ENCODE measurements at regions of chr3 and their contacts with region 1.

Region 1: GRCh38 chr3:119145500-119146191 is at the start of gene TEX55:
- DNase-seq: peak in 2 of 6 donors; percentile 26 to 43
- ATAC-seq: peak; percentile 80 to 97 (median 94)
- H3K4me3 ChIP-seq: no peak within 1 kb of the TSS
- H3K27ac ChIP-seq: no peak within 1 kb of the TSS
- H3K4me1 ChIP-seq: no peaks in the 10 kb centered on the region
- H3K27me3 ChIP-seq: no peaks in the 10 kb centered on the region
- CTCF ChIP-seq: peak; percentile 31 to 54 (median 34)
- total RNA-seq, gene TEX55: not detected

Region 2: DNA sequence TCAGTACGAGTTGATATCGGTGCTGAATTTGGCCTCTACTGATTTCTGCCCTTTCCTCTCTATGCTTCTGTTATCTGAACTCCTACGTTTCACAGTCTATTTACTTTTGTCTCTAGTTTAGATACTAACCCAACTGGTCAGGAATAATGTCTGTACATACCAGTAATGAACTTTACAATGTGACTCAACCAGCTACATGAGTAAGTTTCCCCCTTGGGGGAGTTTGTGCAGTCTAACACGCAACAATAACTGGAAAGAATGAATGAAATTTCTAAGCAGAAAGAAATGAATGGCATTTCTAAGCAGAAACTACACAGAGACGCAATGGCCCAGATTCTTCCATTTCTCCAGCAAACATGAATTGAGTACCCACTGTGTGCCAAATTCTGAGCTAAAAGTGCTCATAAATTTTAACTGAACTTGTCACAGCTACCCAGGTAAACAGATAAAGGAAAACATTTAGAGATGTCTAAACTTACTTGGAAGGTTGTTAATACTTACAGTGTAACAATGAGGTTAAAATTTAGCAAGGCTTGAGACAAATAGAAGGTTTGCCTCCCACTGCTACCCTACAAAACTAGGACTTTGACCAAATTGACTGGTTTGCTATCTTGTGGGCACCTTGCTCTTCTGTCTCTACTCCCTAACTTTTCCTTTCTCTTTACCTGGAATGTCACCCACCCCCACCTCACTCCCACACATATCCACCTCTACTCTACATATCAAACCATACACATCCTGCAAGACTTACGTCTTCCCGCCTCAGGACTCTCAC is 39.3 kb after region 1 on chr3:
- intact Hi-C with region 1: no loop called
- DNase-seq: no peak
- ATAC-seq: peak in 3 of 4 donors; percentile 26 to 59 (median 45)
- H3K4me3 ChIP-seq: no peak overlapping the region
- H3K27ac ChIP-seq: peak overlapping the region in 1 of 4 donors; percentile 23
- H3K4me1 ChIP-seq: peaks cover 0 to 4% (median 0%) of the 10 kb centered on the region in 3 donors
- H3K27me3 ChIP-seq: no peaks in the 10 kb centered on the region
- CTCF ChIP-seq: no peak

Region 3: DNA sequence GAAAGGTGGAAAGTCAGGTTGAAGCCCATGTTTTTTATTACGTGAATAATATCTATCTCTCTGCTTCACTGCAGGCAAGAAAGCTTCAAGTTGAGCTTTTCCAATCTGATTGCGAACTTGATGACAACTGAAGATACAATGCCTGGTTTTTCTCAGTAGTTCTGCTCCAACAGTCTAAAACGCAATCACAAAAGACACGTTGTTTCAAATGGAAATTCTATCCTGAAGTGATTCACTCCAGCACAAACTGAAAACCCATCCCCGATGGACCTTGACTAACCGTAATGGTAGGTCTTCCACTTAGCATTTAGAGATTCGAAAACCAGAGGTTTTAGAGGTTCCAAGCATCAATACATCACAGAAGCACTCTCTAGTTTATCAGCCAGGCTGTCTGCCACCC is 84.4 kb after region 1 on chr3:
- intact Hi-C with region 1: no loop called
- DNase-seq: no peak
- ATAC-seq: no peak
- H3K4me3 ChIP-seq: no peak overlapping the region
- H3K27ac ChIP-seq: no peak overlapping the region
- H3K4me1 ChIP-seq: peaks cover 0 to 4% (median 0%) of the 10 kb centered on the region in 3 donors
- H3K27me3 ChIP-seq: no peaks in the 10 kb centered on the region
- CTCF ChIP-seq: no peak

Region 4: GRCh38 chr3:119240591-119241434 is 95.2 kb after region 1 on chr3 and contains the start of gene B4GALT4:
- intact Hi-C with region 1: loop called in 1 of 3 experiments (anchors 10 kb)
- DNase-seq: peak; percentile 88 to 95 (median 90)
- ATAC-seq: peak; percentile 94 to 97 (median 95)
- H3K4me3 ChIP-seq: peak within 1 kb of the TSS; percentile 56 to 85 (median 65)
- H3K27ac ChIP-seq: peak within 1 kb of the TSS; percentile 88 to 91 (median 90)
- H3K4me1 ChIP-seq: peaks cover 15 to 19% (median 19%) of the 10 kb centered on the region in 3 donors
- H3K27me3 ChIP-seq: no peaks in the 10 kb centered on the region
- CTCF ChIP-seq: no peak
- total RNA-seq, gene B4GALT4: 9.1 to 20.1 (median 13.8) TPM

Region 5: DNA sequence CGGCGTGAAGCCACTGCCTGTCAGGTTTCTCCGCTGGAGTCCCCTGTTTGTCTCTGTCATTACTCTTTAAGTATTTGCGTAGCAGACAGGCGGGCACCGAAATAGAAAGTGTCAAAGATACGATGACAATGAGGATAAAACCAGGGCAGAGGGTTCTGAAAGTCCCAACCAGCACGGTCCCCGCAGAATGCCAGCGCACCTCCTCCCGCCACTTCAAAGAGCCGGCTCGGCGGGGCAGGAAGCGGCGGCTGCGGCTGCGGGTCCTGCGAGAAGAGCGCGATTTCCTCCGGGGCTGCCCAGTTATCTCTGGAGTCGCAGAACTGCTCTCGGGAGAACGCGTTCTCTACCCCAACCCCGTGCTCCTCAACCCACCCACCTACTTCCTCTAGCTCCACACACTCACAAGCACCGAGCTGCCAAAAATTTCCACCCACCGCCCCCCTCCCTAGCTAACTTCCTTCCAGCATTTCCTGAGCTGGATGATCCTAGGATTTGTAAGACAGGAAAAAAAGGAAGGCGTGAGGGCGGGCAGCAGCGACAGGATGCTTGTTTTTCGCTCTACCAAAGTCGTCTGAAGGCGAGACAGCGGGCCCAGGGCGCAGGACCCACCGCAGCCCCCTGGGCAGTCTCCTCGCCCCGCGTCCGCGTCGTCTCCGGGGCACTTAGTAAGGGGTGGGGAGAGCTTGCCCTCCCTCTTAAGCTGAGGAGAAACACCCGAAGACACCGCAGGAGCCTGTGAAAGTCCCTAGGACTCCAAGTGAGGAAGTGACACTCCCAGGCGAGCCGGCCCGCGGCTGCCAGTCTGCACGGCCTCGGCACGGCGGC is 148.4 kb after region 1 on chr3 and contains the start of gene ARHGAP31:
- intact Hi-C with region 1: no loop called
- DNase-seq: peak; percentile 30 to 83 (median 54)
- ATAC-seq: peak; percentile 75 to 89 (median 88)
- H3K4me3 ChIP-seq: peak within 1 kb of the TSS; percentile 53 to 77 (median 63)
- H3K27ac ChIP-seq: peak within 1 kb of the TSS; percentile 53 to 83 (median 69)
- H3K4me1 ChIP-seq: peaks cover 0 to 8% (median 5%) of the 10 kb centered on the region in 3 donors
- H3K27me3 ChIP-seq: no peaks in the 10 kb centered on the region
- CTCF ChIP-seq: no peak
- total RNA-seq, gene ARHGAP31: 2.6 to 8.3 (median 3.5) TPM

Measured in pancreas (tissue), 10 donors.